ENCODE measurements at regions of chr2 and their contacts with region 1.

Region 1: GRCh38 chr2:43611987-43612894 is 16.4 kb upstream of the THADA start:
- DNase-seq: peak; percentile 73
- H3K4me3 ChIP-seq: no peak overlapping the region
- H3K27ac ChIP-seq: no peak overlapping the region
- H3K4me1 ChIP-seq: no peaks in the 10 kb centered on the region
- CTCF ChIP-seq: peak; percentile 96

Region 2: DNA sequence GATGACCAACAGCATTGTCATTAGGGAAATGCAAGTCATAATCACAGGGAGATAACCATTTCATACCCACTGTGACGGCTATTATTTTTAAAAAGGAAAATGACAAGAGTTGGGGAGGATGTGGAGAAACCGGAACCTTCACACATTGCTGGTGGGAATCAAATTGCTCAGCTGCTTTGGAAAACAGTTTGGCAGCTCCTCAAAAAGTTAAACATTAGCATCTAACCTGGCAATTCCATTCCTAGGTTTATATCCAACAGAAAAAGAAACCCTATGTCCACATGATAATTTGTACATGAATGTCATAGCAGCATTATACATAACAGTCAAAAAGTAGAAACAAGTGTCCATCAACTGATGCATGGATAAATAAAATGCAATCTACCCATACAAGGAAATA is 1176.6 kb before region 1 on chr2:
- CTCF ChIA-PET with region 1: no interaction called
- POLR2A ChIA-PET with region 1: no interaction called
- intact Hi-C with region 1: no loop called
- DNase-seq: no peak
- H3K4me3 ChIP-seq: no peak overlapping the region
- H3K27ac ChIP-seq: no peak overlapping the region
- H3K4me1 ChIP-seq: no peaks in the 10 kb centered on the region
- CTCF ChIP-seq: no peak

Region 3: DNA sequence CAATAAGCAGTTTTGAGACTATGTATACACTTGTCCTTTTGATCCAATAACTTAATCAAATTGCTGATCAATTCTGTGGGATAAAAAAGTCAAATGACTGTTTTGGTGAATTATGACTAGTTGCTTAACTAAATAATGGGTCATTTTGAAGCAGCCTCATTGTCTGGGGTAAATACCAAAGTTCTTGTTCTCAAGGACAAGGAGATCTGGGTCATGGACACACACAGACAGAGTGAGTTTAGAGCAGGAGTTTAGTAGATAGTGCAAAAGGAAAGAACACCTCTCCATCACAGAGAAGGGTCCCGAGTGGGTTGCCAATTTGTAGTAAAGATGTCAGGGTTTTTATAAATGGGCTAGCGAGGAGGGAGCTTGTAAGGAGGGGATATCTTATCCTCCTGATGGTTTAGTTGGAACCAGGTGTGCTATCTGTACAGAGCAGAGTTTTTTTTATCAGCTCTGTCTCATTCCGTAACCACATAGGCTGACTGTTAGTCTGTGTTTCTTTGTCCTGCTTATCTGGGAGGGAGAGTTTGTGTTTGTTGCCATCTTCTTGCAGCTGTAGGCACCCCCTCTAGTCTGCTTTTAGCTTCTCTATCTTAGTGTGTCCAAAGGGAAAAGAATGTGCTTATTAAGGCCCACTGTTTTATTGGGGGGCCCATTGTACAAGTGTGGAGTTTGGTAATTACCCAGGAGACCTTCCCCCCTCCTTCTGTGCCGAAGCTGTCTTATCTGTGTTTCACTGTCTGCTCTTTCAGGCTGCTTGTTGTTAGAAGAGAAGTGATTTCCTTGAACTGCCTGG is 112.7 kb after region 1 on chr2:
- CTCF ChIA-PET with region 1: no interaction called
- POLR2A ChIA-PET with region 1: no interaction called
- intact Hi-C with region 1: no loop called
- DNase-seq: no peak
- H3K4me3 ChIP-seq: no peak overlapping the region
- H3K27ac ChIP-seq: no peak overlapping the region
- H3K4me1 ChIP-seq: no peaks in the 10 kb centered on the region
- CTCF ChIP-seq: no peak

Region 4: DNA sequence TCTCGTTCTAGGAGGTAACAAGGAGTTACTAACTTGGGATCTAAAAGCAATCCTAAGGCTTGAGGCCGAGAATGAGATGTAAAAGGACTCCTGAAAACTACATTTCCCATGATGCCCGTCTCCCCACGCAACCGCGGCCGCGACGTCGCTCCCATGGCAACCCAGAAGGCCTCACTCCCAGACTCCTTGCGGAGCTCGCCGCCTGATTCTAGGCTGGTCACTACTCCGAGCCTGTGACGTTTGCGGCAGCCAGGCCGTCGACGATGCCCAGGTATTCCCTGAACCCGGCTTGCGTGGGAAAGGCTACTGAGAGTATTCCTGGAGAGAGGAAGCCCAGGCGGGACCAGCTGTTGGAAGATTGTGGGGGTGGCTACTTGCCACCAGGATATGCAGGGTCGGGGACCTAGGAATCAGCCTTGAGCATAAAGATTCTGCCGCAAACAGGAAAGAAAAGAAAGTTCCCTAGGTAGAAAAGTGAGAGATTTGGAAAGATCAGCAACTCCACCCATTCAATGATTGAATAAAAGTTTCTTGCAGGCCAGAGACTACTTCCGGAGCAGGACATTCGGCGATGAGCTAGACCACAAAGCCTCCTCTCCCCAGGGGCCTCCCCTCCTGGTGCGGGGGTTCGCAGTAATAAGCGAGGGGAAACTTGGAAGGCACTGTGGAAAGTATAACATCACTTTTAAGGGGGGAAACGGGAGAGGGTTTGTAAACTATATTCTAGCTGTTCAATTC is 161.8 kb after region 1 on chr2 and contains the start of gene DYNC2LI1:
- CTCF ChIA-PET with region 1: no interaction called
- POLR2A ChIA-PET with region 1: no interaction called
- intact Hi-C with region 1: loop called (anchors 5 kb)
- DNase-seq: peak; percentile 84
- H3K4me3 ChIP-seq: peak within 1 kb of the TSS; percentile 77
- H3K27ac ChIP-seq: no peak within 1 kb of the TSS
- H3K4me1 ChIP-seq: peaks cover 8% of the 10 kb centered on the region
- CTCF ChIP-seq: no peak
- total RNA-seq, gene DYNC2LI1: 13.6 and 18.9 TPM in 2 replicates

Measured in OCI-LY7 (cell line).